PC-3 (cell line): ENCODE measurements at regions of chr4 and their contacts with region 1.

Region 1: DNA sequence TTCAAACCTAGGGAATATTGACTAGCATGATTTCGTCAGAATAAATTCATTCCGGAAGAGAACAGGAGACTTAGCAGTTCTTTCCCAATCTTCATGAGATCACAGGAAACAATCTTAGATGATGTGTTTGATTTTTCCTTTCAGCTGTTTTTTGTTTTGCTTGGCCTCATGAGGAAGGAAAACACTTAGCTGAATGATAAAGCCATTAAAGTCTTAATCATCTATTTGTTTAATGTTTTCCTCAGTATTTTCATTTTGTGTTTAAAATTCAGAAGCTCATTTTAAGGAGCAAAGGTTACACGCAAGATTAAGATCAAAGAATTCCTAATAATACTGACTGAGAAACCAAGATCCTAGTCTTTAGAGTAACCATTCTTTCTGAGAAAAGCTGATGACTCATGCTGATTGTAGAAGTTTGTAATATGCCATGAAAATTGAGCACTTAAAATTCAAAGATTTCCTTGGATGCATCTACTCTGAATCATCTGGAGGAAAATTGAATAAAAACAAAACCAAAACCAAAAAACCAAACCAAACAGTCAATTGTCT is 15.4 kb upstream of the TBC1D19 start:
- DNase-seq: peak; percentile 93
- ATAC-seq: peak; percentile 80
- H3K4me3 ChIP-seq: no peak overlapping the region
- H3K27ac ChIP-seq: peak overlapping the region; percentile 93
- H3K4me1 ChIP-seq: peaks cover 39% of the 10 kb centered on the region
- H3K27me3 ChIP-seq: no peaks in the 10 kb centered on the region
- CTCF ChIP-seq: no peak

Region 2: GRCh38 chr4:26349496-26349895 is 219.0 kb before region 1 on chr4:
- CTCF ChIA-PET with region 1: no interaction called
- POLR2A ChIA-PET with region 1: no interaction called
- intact Hi-C with region 1: no loop called
- DNase-seq: no peak
- ATAC-seq: no peak
- H3K4me3 ChIP-seq: no peak overlapping the region
- H3K27ac ChIP-seq: no peak overlapping the region
- H3K4me1 ChIP-seq: no peaks in the 10 kb centered on the region
- H3K27me3 ChIP-seq: no peaks in the 10 kb centered on the region
- CTCF ChIP-seq: no peak

Region 3: DNA sequence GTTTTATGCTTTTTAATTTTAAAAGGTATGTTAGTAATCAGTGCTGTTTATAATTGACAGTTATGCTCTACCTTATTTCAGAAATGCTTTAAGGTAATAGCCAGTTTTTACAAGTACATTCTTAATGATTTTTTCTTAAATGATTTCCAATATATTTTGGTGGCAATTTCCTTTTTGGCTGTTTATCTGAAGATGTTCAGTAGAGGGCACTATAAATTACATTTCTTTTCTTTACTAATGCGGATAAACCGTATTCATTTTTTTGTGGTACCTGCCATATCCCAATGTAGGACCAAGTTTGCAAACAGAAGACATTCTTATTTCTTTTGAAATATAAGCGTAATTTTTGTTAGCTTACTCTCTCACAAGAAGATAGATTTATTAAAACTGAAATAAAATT is 143.7 kb before region 1 on chr4:
- CTCF ChIA-PET with region 1: no interaction called
- POLR2A ChIA-PET with region 1: no interaction called
- intact Hi-C with region 1: no loop called
- DNase-seq: no peak
- ATAC-seq: no peak
- H3K4me3 ChIP-seq: no peak overlapping the region
- H3K27ac ChIP-seq: no peak overlapping the region
- H3K4me1 ChIP-seq: no peaks in the 10 kb centered on the region
- H3K27me3 ChIP-seq: no peaks in the 10 kb centered on the region
- CTCF ChIP-seq: peak; percentile 52

Region 4: GRCh38 chr4:26459054-26459755 is 109.3 kb before region 1 on chr4:
- CTCF ChIA-PET with region 1: no interaction called
- POLR2A ChIA-PET with region 1: no interaction called
- intact Hi-C with region 1: loop called (anchors 10 kb)
- DNase-seq: peak; percentile 65
- ATAC-seq: peak; percentile 67
- H3K4me3 ChIP-seq: peak overlapping the region; percentile 55; the same call in 1 of the 2 replicates
- H3K27ac ChIP-seq: no peak overlapping the region
- H3K4me1 ChIP-seq: no peaks in the 10 kb centered on the region; the same call in 1 of the 2 replicates
- H3K27me3 ChIP-seq: no peaks in the 10 kb centered on the region
- CTCF ChIP-seq: peak; percentile 68

Region 5: GRCh38 chr4:26542991-26543390 is 25.5 kb before region 1 on chr4:
- CTCF ChIA-PET with region 1: no interaction called
- POLR2A ChIA-PET with region 1: interaction called, 12 read pairs
- intact Hi-C with region 1: no loop called
- DNase-seq: no peak
- ATAC-seq: no peak
- H3K4me3 ChIP-seq: no peak overlapping the region
- H3K27ac ChIP-seq: no peak overlapping the region
- H3K4me1 ChIP-seq: no peaks in the 10 kb centered on the region
- H3K27me3 ChIP-seq: no peaks in the 10 kb centered on the region
- CTCF ChIP-seq: no peak

Region 6: GRCh38 chr4:26583865-26584652 is 15.5 kb after region 1 on chr4 and contains the start of gene TBC1D19:
- CTCF ChIA-PET with region 1: no interaction called
- POLR2A ChIA-PET with region 1: no interaction called
- intact Hi-C with region 1: loop called (anchors 2 kb)
- DNase-seq: peak; percentile 84
- ATAC-seq: peak; percentile 98
- H3K4me3 ChIP-seq: peak within 1 kb of the TSS; percentile 86
- H3K27ac ChIP-seq: peak within 1 kb of the TSS; percentile 69
- H3K4me1 ChIP-seq: peaks cover 8% of the 10 kb centered on the region
- H3K27me3 ChIP-seq: no peaks in the 10 kb centered on the region
- CTCF ChIP-seq: no peak
- total RNA-seq, gene TBC1D19: 4.0 and 4.5 TPM in 2 replicates

Region 7: DNA sequence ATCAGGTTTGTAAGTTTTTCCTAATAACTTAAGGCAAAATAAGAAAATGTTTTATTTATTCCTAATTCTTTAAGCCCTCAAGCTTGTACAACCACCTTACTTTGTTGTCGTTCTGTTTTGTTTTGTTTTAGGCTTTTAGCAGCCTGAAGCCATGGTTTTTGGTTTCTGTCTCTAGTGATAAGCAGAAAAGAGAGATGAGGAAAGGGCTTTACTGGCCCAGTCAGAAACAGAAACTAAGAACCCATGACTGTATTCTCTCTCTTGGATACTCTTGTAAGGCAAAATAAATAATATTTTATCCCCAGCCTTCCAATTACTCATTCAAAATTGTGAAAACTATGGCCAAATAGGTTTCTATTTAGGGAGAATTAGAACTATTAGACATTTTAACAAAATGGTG is 44.7 kb after region 1 on chr4:
- CTCF ChIA-PET with region 1: no interaction called
- POLR2A ChIA-PET with region 1: no interaction called
- intact Hi-C with region 1: no loop called
- DNase-seq: no peak
- ATAC-seq: no peak
- H3K4me3 ChIP-seq: no peak overlapping the region
- H3K27ac ChIP-seq: no peak overlapping the region
- H3K4me1 ChIP-seq: no peaks in the 10 kb centered on the region
- H3K27me3 ChIP-seq: no peaks in the 10 kb centered on the region
- CTCF ChIP-seq: no peak

Region 8: DNA sequence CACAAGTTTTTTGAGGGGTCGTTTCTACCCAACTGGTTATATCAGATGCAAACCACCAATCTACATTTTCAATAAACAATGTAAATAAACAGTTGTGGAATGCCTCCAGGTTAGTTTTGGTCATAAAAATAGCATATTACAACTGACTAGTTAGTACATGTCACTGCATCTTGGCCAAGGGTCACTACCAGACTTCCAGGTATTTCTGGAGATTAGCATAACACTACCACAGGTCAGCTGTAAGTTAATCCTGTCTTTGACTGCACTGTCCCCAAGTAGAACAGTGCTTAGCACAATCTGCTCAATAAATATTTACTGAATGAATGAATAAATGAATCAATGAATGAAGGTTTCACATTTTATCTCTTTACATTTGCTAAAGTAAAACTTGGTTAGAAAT is 79.7 kb after region 1 on chr4:
- CTCF ChIA-PET with region 1: no interaction called
- POLR2A ChIA-PET with region 1: no interaction called
- intact Hi-C with region 1: no loop called
- DNase-seq: peak; percentile 1
- ATAC-seq: no peak
- H3K4me3 ChIP-seq: no peak overlapping the region
- H3K27ac ChIP-seq: no peak overlapping the region
- H3K4me1 ChIP-seq: no peaks in the 10 kb centered on the region
- H3K27me3 ChIP-seq: no peaks in the 10 kb centered on the region
- CTCF ChIP-seq: no peak

Region 9: GRCh38 chr4:26719954-26720552 is 151.5 kb after region 1 on chr4:
- CTCF ChIA-PET with region 1: no interaction called
- POLR2A ChIA-PET with region 1: no interaction called
- intact Hi-C with region 1: loop called (anchors 5 kb)
- DNase-seq: peak; percentile 44
- ATAC-seq: peak; percentile 27; the same call in 1 of the 2 replicates
- H3K4me3 ChIP-seq: no peak overlapping the region
- H3K27ac ChIP-seq: no peak overlapping the region
- H3K4me1 ChIP-seq: peaks cover 9% of the 10 kb centered on the region
- H3K27me3 ChIP-seq: no peaks in the 10 kb centered on the region
- CTCF ChIP-seq: peak; percentile 72